Dendritic cell treated with granulocyte-macrophage colony-stimulating factor and Interleukin-4, amounts not matched to agents 40 ng/mL and 50 ng/mL, for 4 days (primary cell): ENCODE measurements at regions of chr3 and their contacts with region 1.

Region 1: DNA sequence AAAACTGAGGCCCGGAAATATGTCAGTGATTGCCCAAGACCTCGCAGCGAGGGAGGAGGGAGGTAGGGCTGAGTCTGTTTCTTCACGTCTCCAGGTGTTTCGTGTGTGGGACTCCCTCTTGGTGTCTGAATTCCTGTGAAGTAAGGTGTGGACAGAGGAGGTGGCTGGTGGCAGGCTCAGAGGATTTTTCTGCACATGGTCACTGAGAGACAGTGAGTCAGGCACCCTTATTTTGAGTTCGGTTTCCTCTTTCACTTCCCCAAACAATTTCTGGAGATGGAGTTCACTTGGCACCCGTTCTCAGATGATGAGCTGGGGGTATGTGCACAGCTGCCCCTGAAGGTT is 46.3 kb upstream of the VPS8 start:
- H3K4me3 Mint-ChIP-seq: no peak overlapping the region
- H3K27ac Mint-ChIP-seq: peak overlapping the region; percentile 84
- H3K4me1 Mint-ChIP-seq: peaks cover 93% of the 10 kb centered on the region
- H3K27me3 Mint-ChIP-seq: peaks cover 17% of the 10 kb centered on the region

Region 2: DNA sequence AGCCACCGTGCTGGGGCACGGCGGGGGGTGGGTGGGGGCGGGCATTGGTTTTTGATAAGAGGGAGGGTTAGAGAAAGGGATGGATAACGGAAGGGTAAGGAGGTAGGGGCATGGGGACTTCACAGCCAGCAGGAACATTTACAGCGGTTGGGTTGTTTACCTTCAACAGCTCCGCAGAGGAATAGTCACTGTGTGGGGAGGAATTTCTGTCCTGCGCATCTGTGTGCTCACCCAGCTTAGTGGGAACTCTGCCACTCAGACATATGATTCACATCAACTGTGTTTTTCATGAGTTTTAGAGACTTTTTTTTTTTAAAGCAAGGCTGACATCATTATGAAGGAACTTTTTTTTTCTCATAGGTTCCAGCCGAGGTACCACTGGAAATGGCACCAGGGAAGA is 366.3 kb before region 1 on chr3:
- intact Hi-C with region 1: no loop called
- H3K4me3 Mint-ChIP-seq: no peak overlapping the region
- H3K27ac Mint-ChIP-seq: no peak overlapping the region
- H3K4me1 Mint-ChIP-seq: no peaks in the 10 kb centered on the region
- H3K27me3 Mint-ChIP-seq: peaks cover 60% of the 10 kb centered on the region

Region 3: GRCh38 chr3:184734903-184735701 is 30.6 kb before region 1 on chr3:
- intact Hi-C with region 1: loop called (anchors 5 kb)
- H3K4me3 Mint-ChIP-seq: no peak overlapping the region
- H3K27ac Mint-ChIP-seq: peak overlapping the region; percentile 29
- H3K4me1 Mint-ChIP-seq: peaks cover 37% of the 10 kb centered on the region
- H3K27me3 Mint-ChIP-seq: peaks cover 29% of the 10 kb centered on the region